Ascending aorta (tissue), 2 donors: ENCODE measurements at regions of chr16 and their contacts with region 1.

Region 1: GRCh38 chr16:73020362-73020884 is 27.5 kb downstream of the ZFHX3 start:
- DNase-seq: peak in 1 of 2 donors; percentile 92
- H3K4me3 ChIP-seq: peak overlapping the region in 1 of 2 donors; percentile 45
- H3K27ac ChIP-seq: peak overlapping the region; percentile 30 to 62
- H3K4me1 ChIP-seq: peaks cover 25 to 70% of the 10 kb centered on the region in 2 donors
- H3K27me3 ChIP-seq: no peaks in the 10 kb centered on the region
- CTCF ChIP-seq: no peak

Region 2: DNA sequence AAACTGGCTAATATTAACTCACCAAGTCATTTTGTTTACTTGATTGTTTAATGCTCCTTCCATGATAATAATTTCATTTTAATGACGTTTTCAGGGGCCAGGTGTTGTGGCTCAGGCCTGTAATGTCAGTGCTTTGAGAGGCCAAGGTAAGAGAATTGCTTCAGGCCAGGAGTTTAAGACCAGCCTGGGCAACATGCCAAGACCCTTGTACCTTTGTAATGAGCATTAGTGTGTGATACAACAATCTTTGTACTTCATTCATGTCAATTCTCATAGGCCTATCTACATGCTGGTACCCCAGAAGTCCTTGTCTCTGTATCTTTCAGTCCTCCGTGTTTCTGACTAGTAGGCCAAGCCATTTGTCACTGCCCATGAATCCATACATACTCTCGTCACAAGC is 269.3 kb before region 1 on chr16:
- intact Hi-C with region 1: no loop called
- DNase-seq: no peak
- H3K4me3 ChIP-seq: no peak overlapping the region
- H3K27ac ChIP-seq: no peak overlapping the region
- H3K4me1 ChIP-seq: no peaks in the 10 kb centered on the region
- H3K27me3 ChIP-seq: no peaks in the 10 kb centered on the region
- CTCF ChIP-seq: no peak

Region 3: GRCh38 chr16:72989579-72990551 is 30.6 kb before region 1 on chr16:
- intact Hi-C with region 1: loop called (anchors 2 kb)
- DNase-seq: peak; percentile 74 to 94
- H3K4me3 ChIP-seq: peak overlapping the region; percentile 43 to 55
- H3K27ac ChIP-seq: peak overlapping the region; percentile 92
- H3K4me1 ChIP-seq: peaks cover 24 to 71% of the 10 kb centered on the region in 2 donors
- H3K27me3 ChIP-seq: no peaks in the 10 kb centered on the region
- CTCF ChIP-seq: no peak

Region 4: DNA sequence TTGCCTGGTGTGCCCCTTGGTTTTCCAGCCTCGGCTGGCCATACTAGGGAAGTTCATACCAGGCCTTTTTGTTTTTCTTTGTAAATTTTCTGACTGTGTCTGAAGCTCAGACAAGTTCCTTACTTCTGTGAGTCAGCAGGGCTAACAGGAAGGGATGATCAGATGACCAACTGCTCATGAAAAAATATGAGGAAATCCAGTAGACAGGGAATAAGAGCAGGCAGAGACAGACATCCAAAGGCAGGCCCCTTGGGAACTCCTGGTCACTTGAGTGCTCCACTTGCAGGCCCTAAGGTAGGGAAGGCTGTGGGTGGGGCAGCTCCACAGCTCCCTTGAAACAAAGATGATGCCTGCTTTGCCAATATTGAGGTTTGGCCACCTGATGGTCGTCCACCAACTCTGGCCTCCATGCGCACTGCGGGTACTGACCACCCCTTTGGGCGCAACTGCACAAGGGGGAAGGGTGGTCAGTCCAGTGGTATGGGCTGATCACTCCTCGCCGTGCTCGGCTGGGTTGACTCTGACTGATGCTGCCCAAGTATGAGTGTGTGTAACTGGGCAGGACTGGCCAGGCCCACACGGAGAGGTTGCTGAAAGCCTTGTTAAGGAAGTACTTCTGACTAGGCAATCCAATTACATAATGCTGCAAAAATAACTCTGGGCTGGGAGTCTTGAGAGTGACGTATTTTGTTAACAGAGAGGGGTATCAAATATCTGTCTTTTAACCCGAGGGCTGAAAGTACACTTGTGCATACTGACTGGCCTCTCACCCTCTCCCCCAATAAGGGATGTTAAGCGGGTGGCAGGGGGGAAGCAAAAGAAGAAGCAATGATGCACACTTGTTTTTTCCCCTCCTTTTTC is 48.3 kb after region 1 on chr16:
- intact Hi-C with region 1: no loop called
- DNase-seq: peak; percentile 92 to 97
- H3K4me3 ChIP-seq: peak overlapping the region; percentile 27 to 50
- H3K27ac ChIP-seq: peak overlapping the region; percentile 98 to 99
- H3K4me1 ChIP-seq: peaks cover 23 to 51% of the 10 kb centered on the region in 2 donors
- H3K27me3 ChIP-seq: no peaks in the 10 kb centered on the region
- CTCF ChIP-seq: peak in 1 of 3 experiments; percentile 2